Naive thymus-derived CD8-positive, alpha-beta T cell (primary cell): ENCODE measurements at regions of chr19 and their contacts with region 1.

Region 1: GRCh38 chr19:2636897-2637683 is 65.4 kb downstream of the GNG7 start:
- DNase-seq: peak; percentile 65 to 89 (median 79)
- ATAC-seq: peak; percentile 94
- H3K4me3 Mint-ChIP-seq: peak overlapping the region in 7 of 10 donors; percentile 14 to 56 (median 33)
- H3K27ac Mint-ChIP-seq: peak overlapping the region in 4 of 10 donors; percentile 7 to 76 (median 71)
- H3K4me1 Mint-ChIP-seq: peaks cover 5 to 26% (median 21%) of the 10 kb centered on the region in 4 donors
- H3K27me3 Mint-ChIP-seq: no peaks in the 10 kb centered on the region

Region 2: DNA sequence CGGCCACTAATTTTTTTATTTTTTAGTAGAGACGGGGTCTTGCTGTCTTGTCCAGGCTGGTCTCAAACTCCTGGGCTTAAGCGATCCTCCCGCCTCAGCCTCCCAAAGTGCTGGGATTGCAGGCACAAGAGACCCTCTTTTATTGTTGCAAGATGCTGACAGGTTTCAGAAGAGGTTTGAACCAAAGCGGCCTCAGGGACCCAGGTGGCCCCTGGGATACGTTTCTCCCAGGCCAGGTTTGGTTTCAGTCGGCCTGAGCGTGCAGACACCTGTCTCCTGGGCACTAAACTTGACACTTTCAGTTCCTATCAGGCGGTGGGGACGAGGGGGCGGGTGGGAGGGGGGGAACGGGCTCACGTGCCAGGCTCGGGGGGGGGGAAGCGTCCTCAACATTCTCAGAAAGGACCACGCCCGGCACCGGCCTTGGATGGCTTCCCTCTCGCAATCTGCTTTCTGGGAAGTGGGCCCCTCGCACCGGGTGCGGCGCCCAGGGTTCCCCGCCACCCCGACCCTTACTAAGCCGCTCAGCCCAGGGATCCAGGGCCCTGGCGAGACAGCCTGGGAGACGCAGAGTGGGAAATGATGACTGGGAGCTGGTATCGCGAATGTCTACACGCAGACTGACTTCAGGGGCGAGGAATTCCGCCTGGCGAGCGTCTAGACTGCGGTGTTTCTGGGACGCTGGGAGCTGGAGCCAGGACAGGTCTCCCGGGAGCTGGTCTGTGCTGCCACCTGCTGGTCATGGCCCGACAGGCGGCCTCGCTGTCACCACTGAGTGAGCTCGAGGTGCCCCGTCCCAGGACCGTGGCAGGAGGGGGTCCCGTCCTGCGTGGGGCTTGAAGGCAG is 26.2 kb before region 1 on chr19:
- POLR2A ChIA-PET with region 1: interaction called, 10 read pairs
- DNase-seq: peak; percentile 73 to 92 (median 86)
- ATAC-seq: peak; percentile 57 to 72
- H3K4me3 Mint-ChIP-seq: peak overlapping the region; percentile 79 to 90 (median 88)
- H3K27ac Mint-ChIP-seq: peak overlapping the region in 8 of 10 donors; percentile 57 to 92 (median 84)
- H3K4me1 Mint-ChIP-seq: peaks cover 13 to 63% (median 39%) of the 10 kb centered on the region in 4 donors
- H3K27me3 Mint-ChIP-seq: no peaks in the 10 kb centered on the region

Region 3: GRCh38 chr19:2618611-2619010 is 18.5 kb before region 1 on chr19:
- POLR2A ChIA-PET with region 1: interaction called, 90 read pairs
- DNase-seq: peak; percentile 48 to 80 (median 62)
- ATAC-seq: peak; percentile 37 to 46
- H3K4me3 Mint-ChIP-seq: peak overlapping the region; percentile 64 to 86 (median 79)
- H3K27ac Mint-ChIP-seq: peak overlapping the region; percentile 88 to 98 (median 95)
- H3K4me1 Mint-ChIP-seq: peaks cover 26 to 80% (median 68%) of the 10 kb centered on the region in 4 donors
- H3K27me3 Mint-ChIP-seq: no peaks in the 10 kb centered on the region